Prostate gland (tissue), 2 donors: ENCODE measurements at regions of chr11 and their contacts with region 1.

Region 1: GRCh38 chr11:8709002-8709672 is 26.5 kb downstream of the RPL27A start:
- DNase-seq: peak; percentile 77
- H3K4me3 ChIP-seq: no peak overlapping the region
- H3K27ac ChIP-seq: peak overlapping the region; percentile 72 to 90
- H3K4me1 ChIP-seq: peaks cover 4% of the 10 kb centered on the region
- H3K27me3 ChIP-seq: no peaks in the 10 kb centered on the region
- CTCF ChIP-seq: no peak
- POLR2A ChIP-seq: no peak

Region 2: DNA sequence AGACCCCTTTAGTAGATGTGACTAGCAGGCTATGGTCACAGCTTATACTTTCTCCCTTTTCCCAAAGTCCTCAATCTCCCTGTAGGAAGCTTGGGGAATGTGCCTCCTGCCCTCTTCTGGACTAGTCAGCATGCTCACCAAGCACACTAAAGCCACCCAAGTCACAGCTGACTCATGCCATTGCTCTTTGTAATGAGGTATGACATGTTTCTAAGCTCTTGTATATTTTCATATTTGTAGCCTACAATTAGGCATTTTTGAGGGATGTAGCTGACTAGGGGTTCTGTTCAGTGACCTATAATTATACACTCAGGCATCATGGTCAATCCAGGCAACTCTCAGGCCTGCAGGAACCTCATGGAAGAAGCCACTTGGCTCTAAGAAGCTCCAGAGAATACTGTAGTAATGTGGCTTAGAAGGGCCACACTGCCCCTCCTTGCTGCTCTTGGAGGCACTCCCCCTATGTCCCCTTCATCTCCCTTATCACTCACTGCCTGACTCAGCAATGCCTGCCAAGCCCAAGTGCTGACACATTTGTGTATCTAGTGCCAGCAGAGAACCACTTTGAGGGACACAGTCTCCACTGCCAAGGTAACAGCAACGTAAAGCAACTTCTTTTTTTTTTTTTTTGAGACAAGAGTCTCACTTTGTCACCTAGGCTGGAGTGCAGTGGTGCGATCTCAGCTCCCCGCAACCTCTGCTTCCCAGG is 59.6 kb after region 1 on chr11:
- intact Hi-C with region 1: loop called (anchors 2 kb)
- DNase-seq: no peak
- H3K4me3 ChIP-seq: no peak overlapping the region
- H3K27ac ChIP-seq: peak overlapping the region in 1 of 2 donors; percentile 4
- H3K4me1 ChIP-seq: no peaks in the 10 kb centered on the region
- H3K27me3 ChIP-seq: no peaks in the 10 kb centered on the region
- CTCF ChIP-seq: peak in 1 of 4 experiments; percentile 42
- POLR2A ChIP-seq: no peak